ENCODE measurements at regions of chr7 and their contacts with region 1.

Region 1: DNA sequence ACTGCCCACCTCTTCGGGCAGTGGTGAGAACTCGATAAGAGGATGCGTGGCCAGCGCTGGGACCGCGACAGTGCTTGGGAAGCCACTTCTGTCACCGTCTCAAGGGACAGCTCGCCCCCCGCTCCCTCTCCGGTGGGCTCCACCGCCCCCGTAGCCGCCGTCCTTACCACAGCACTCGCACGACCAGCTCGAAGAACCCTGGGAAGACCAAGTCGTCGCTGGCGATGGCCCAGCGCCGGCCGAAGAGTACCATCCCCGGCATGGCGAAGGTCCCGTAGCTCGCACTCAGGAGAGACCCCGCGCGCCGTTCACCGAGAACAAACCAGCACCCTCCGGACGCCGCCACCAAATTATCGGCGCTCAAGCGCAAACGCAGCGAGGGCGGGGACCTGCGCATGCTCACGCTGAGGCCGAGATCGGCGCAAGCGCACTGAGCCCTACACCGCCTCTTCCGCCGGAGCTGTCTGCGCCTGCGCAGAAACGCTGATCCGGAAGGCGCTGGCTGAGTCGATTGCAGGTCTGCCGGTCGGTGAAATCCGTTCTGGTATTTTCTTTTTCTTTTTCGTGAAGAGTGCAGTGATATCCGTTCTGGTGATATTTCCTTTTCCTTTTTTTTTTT is at the start of gene DAGLB:
- DNase-seq: peak; percentile 85
- ATAC-seq: peak; percentile 95
- H3K4me3 ChIP-seq: peak within 1 kb of the TSS; percentile 81
- H3K27ac ChIP-seq: peak within 1 kb of the TSS; percentile 78
- H3K4me1 ChIP-seq: no peaks in the 10 kb centered on the region; the same call in 1 of the 2 replicates
- H3K27me3 ChIP-seq: no peaks in the 10 kb centered on the region
- CTCF ChIP-seq: no peak
- EP300 ChIP-seq: no peak
- POLR2A ChIP-seq: peak; percentile 92
- RAD21 ChIP-seq: no peak
- polyA plus RNA-seq, gene DAGLB: 1.2 to 2.4 TPM

Region 2: DNA sequence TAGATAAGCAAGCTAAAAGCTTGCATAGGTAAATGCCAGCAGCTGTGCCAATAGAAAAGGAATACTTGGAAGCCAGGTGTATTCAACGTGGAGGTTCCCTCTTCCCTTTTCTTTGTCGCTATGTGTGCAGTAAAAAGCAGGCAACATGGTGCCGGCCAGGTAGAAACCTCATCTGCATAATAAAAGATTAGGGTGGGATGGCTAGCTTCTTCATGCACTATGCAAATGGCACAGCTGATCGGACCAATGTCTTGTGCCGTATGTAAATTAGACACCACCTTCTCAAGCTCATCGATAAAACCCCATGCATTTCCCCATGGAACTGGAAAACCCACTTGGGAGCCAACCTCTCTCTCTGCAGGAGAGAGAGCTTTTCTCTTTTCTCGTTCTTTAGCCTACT is 1916.5 kb before region 1 on chr7:
- CTCF ChIA-PET with region 1: no interaction called
- POLR2A ChIA-PET with region 1: no interaction called
- RAD21 ChIA-PET with region 1: no interaction called
- SMC1A ChIA-PET with region 1: no interaction called
- in situ Hi-C with region 1: no loop called
- intact Hi-C with region 1: no loop called
- DNase-seq: no peak
- ATAC-seq: no peak
- H3K4me3 ChIP-seq: no peak overlapping the region
- H3K27ac ChIP-seq: no peak overlapping the region
- H3K4me1 ChIP-seq: no peaks in the 10 kb centered on the region
- H3K27me3 ChIP-seq: no peaks in the 10 kb centered on the region
- CTCF ChIP-seq: no peak
- EP300 ChIP-seq: no peak
- POLR2A ChIP-seq: no peak
- RAD21 ChIP-seq: no peak

Region 3: DNA sequence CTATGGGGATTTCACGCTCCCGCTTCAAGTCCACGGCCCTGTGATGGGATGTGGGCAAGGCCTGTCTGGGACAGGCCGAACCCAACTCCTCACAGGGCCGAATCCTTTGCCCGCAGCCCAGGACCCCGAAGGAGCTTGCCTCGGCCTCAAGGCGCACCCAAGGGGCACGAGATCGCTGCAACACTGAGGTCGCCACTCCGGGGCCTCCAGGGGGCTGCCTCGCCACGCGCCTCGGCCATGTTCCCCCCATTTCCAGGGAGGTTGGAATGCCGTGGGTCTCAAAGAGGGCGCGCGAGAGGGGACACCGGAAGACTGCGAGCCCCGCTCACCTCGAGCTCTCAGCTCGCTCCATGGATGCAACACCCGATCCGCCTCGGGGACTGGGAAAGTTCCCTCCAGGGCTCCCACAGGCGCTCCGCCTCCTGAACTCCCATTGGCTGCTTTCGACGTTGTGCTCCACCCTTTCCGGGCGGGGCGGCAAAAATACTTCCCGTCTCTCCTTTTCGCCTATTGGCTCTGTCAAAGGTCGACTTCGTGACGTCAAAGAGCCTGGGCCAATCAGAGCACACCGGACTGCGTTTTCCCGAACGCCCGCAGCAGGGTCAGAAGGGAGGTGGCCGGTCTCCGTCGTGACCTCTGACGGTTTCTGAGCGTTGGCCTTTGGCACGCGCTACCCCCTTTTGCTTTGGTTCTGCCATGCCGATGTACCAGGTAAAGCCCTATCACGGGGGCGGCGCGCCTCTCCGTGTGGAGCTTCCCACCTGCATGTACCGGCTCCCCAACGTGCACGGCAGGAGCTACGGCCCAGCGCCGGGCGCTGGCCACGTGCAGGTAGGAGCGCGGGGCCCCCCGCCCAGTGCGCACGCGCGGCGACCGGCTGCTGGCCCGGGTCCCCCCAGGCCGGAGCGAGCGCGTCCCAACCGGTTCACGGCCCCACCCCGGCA is 438.8 kb before region 1 on chr7 and contains the starts of genes AIMP2 and PMS2:
- CTCF ChIA-PET with region 1: no interaction called
- POLR2A ChIA-PET with region 1: interaction called, 5 read pairs
- RAD21 ChIA-PET with region 1: no interaction called
- SMC1A ChIA-PET with region 1: no interaction called
- in situ Hi-C with region 1: no loop called
- intact Hi-C with region 1: loop called (anchors 10 kb)
- DNase-seq: peak; percentile 96
- ATAC-seq: peak; percentile 95
- H3K4me3 ChIP-seq: peak within 1 kb of the TSS; percentile 93
- H3K27ac ChIP-seq: peak within 1 kb of the TSS; percentile 89
- H3K4me1 ChIP-seq: 0 out of 2 replicates have a peak, but pooled peaks cover 2% of the 10 kb centered on the region
- H3K27me3 ChIP-seq: no peaks in the 10 kb centered on the region
- CTCF ChIP-seq: peak; percentile 8 to 23 (median 18); a peak in 2 of 6 replicates
- EP300 ChIP-seq: no peak
- POLR2A ChIP-seq: peak; percentile 86
- RAD21 ChIP-seq: no peak
- polyA plus RNA-seq, gene AIMP2: 55.6 to 80.0 TPM
- polyA plus RNA-seq, gene PMS2: 3.6 to 4.7 TPM

Region 4: GRCh38 chr7:6188389-6188788 is 259.3 kb before region 1 on chr7:
- CTCF ChIA-PET with region 1: no interaction called
- POLR2A ChIA-PET with region 1: no interaction called
- RAD21 ChIA-PET with region 1: no interaction called
- SMC1A ChIA-PET with region 1: no interaction called
- in situ Hi-C with region 1: no loop called
- intact Hi-C with region 1: no loop called
- DNase-seq: no peak
- ATAC-seq: no peak
- H3K4me3 ChIP-seq: no peak overlapping the region
- H3K27ac ChIP-seq: no peak overlapping the region
- H3K4me1 ChIP-seq: no peaks in the 10 kb centered on the region
- H3K27me3 ChIP-seq: no peaks in the 10 kb centered on the region
- CTCF ChIP-seq: no peak
- EP300 ChIP-seq: no peak
- POLR2A ChIP-seq: no peak
- RAD21 ChIP-seq: no peak

Region 5: GRCh38 chr7:6435486-6436384 is 12.0 kb before region 1 on chr7:
- CTCF ChIA-PET with region 1: interaction called, 21 read pairs
- POLR2A ChIA-PET with region 1: interaction called, 5 read pairs
- RAD21 ChIA-PET with region 1: interaction called, 4 read pairs
- SMC1A ChIA-PET with region 1: interaction called, 9 read pairs
- in situ Hi-C with region 1: no loop called
- intact Hi-C with region 1: no loop called
- DNase-seq: peak; percentile 54
- ATAC-seq: peak; percentile 97
- H3K4me3 ChIP-seq: peak overlapping the region; percentile 38
- H3K27ac ChIP-seq: peak overlapping the region; percentile 63; the same call in 1 of the 2 replicates
- H3K4me1 ChIP-seq: peaks cover 15% of the 10 kb centered on the region
- H3K27me3 ChIP-seq: no peaks in the 10 kb centered on the region
- CTCF ChIP-seq: peak; percentile 95 to 98 (median 98); a peak in 5 of 6 replicates
- EP300 ChIP-seq: no peak
- POLR2A ChIP-seq: no peak
- RAD21 ChIP-seq: peak; percentile 88

Region 6: GRCh38 chr7:6465862-6466261 is 18.2 kb after region 1 on chr7:
- CTCF ChIA-PET with region 1: no interaction called
- POLR2A ChIA-PET with region 1: no interaction called
- RAD21 ChIA-PET with region 1: no interaction called
- SMC1A ChIA-PET with region 1: no interaction called
- in situ Hi-C with region 1: no loop called
- intact Hi-C with region 1: no loop called
- DNase-seq: no peak
- ATAC-seq: no peak
- H3K4me3 ChIP-seq: no peak overlapping the region
- H3K27ac ChIP-seq: no peak overlapping the region
- H3K4me1 ChIP-seq: no peaks in the 10 kb centered on the region
- H3K27me3 ChIP-seq: no peaks in the 10 kb centered on the region
- CTCF ChIP-seq: no peak
- EP300 ChIP-seq: no peak
- POLR2A ChIP-seq: no peak
- RAD21 ChIP-seq: no peak

Measured in GM12878 (cell line).